ENCODE measurements at regions of chr10 and their contacts with region 1.

Region 1: GRCh38 chr10:91298224-91298871 is 77.9 kb downstream of the PCGF5 start:
- DNase-seq: peak; percentile 59 to 84 (median 70)
- H3K4me3 ChIP-seq: peak overlapping the region; percentile 29 to 77 (median 57)
- H3K27ac ChIP-seq: peak overlapping the region in 56 of 59 donors; percentile 1 to 88 (median 70)
- H3K27me3 ChIP-seq: no peaks in the 10 kb centered on the region
- CTCF ChIP-seq: peak; percentile 72 to 97 (median 94)

Region 2: GRCh38 chr10:89973326-89973725 is 1325.0 kb before region 1 on chr10:
- intact Hi-C with region 1: no loop called
- DNase-seq: no peak
- H3K4me3 ChIP-seq: no peak overlapping the region
- H3K27ac ChIP-seq: no peak overlapping the region
- H3K27me3 ChIP-seq: peaks cover 0 to 15% (median 0%) of the 10 kb centered on the region in 45 donors
- CTCF ChIP-seq: no peak

Region 3: GRCh38 chr10:91389636-91390512 is 91.5 kb after region 1 on chr10:
- intact Hi-C with region 1: loop called in 1 of 2 experiments (anchors 5 kb)
- DNase-seq: no peak
- H3K4me3 ChIP-seq: peak overlapping the region in 24 of 59 donors; percentile 3 to 49 (median 21)
- H3K27ac ChIP-seq: no peak overlapping the region
- H3K27me3 ChIP-seq: no peaks in the 10 kb centered on the region
- CTCF ChIP-seq: peak; percentile 52 to 86 (median 72)

Region 4: DNA sequence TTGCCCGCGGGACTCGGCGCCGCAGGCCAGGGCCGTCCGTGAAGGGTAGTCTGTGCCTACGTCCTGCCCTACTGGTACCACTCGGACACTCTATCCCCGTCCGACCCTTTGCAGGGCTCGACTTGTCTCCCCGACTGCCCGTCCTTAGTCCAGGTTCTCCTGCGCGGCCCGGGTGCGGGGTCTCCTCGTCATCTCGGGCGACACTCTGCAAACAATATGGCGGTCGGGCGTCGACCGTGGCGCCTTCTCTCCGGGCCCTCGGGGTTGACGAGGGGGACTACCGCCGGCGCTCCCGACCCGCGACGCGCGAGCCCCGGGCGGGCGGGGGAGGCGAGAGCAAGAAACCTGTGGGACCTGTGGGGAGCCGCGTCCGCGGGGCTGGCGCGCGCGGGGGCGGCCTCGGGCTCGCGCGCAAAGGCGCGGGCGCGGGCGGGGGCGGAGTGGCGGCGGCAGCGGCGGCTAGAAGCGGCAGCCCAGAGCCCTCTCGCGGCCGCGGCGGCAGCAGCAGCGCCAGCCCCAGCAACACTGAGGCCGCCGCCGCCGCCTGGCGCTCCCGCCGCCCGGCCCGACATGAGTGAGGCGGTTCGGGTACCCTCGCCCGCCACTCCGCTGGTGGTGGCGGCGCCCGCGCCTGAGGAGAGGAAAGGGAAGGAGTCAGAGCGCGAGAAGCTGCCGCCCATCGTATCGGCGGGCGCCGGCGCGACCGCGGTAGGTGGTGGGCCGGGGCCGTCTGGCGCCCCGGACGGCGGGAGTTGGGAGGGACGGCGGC is 111.7 kb after region 1 on chr10 and contains the start of gene HECTD2:
- intact Hi-C with region 1: loop called in 1 of 2 experiments (anchors 2 kb)
- DNase-seq: peak; percentile 40 to 88 (median 75)
- H3K4me3 ChIP-seq: peak within 1 kb of the TSS; percentile 63 to 99 (median 89)
- H3K27ac ChIP-seq: peak within 1 kb of the TSS; percentile 92 to 100 (median 99)
- H3K27me3 ChIP-seq: no peaks in the 10 kb centered on the region
- CTCF ChIP-seq: peak in 48 of 56 donors; percentile 2 to 65 (median 41)
- total RNA-seq, gene HECTD2: 13.3 to 40.3 (median 26.3) TPM

Region 5: GRCh38 chr10:91551856-91552255 is 253.5 kb after region 1 on chr10:
- intact Hi-C with region 1: loop called in 1 of 2 experiments (anchors 2 kb)
- DNase-seq: peak in 4 of 10 donors; percentile 25 to 52 (median 38)
- H3K4me3 ChIP-seq: peak overlapping the region in 19 of 59 donors; percentile 4 to 47 (median 23)
- H3K27ac ChIP-seq: peak overlapping the region in 24 of 59 donors; percentile 2 to 75 (median 53)
- H3K27me3 ChIP-seq: peaks cover 0 to 5% (median 0%) of the 10 kb centered on the region in 45 donors
- CTCF ChIP-seq: peak; percentile 22 to 77 (median 60)